Caco-2 (cell line): ENCODE measurements at regions of chr10 and their contacts with region 1.

Region 1: DNA sequence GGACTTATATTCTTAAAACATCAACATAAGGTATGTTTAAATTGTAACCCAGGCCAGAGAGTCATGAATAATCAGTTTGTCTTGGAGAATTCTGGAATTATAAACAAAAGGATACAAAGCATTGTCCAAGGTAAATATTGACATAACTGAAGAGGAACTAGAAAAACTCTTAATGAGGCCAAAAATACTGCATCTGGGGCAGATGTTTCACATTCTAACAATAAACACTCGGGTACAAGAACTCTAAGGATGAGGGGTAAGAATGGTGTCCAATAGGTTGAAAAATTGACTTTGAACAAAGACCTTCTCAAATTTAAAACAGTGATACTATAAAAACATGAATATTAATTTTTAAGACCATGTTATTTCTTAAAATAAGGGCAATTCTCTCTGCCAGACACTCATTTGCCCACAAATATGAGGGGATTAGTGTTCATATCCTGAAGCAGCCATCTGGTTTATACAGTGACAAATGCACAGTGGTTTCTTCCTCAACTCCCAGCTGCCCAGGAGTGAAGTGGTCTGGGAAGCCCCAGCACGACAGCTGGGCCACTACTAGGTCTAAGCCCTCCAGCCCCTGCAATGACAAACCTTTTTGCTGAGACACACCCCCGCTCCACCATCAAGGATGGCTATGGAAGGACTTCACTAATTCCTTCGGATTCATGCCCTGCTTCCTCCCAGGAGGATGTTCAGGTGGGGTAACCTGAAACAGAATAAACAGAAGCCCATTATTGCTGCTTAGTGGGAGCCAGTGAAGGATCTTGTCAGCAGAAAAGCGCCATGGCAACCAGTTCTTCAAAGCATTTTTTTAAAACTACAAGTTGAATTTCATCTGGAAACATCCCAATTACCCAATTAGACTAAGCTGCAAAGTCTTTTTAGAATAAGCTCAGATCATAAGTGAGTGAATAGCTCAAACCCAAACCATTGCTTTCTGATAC is 107.5 kb upstream of the ARID5B start:
- DNase-seq: no peak
- H3K4me3 ChIP-seq: no peak overlapping the region
- H3K4me3 Mint-ChIP-seq: no peak overlapping the region
- H3K27ac Mint-ChIP-seq: no peak overlapping the region
- H3K4me1 ChIP-seq: peaks cover 23% of the 10 kb centered on the region
- H3K4me1 Mint-ChIP-seq: peaks cover 22% of the 10 kb centered on the region
- H3K27me3 ChIP-seq: no peaks in the 10 kb centered on the region
- H3K27me3 Mint-ChIP-seq: no peaks in the 10 kb centered on the region
- CTCF ChIP-seq: no peak

Region 2: DNA sequence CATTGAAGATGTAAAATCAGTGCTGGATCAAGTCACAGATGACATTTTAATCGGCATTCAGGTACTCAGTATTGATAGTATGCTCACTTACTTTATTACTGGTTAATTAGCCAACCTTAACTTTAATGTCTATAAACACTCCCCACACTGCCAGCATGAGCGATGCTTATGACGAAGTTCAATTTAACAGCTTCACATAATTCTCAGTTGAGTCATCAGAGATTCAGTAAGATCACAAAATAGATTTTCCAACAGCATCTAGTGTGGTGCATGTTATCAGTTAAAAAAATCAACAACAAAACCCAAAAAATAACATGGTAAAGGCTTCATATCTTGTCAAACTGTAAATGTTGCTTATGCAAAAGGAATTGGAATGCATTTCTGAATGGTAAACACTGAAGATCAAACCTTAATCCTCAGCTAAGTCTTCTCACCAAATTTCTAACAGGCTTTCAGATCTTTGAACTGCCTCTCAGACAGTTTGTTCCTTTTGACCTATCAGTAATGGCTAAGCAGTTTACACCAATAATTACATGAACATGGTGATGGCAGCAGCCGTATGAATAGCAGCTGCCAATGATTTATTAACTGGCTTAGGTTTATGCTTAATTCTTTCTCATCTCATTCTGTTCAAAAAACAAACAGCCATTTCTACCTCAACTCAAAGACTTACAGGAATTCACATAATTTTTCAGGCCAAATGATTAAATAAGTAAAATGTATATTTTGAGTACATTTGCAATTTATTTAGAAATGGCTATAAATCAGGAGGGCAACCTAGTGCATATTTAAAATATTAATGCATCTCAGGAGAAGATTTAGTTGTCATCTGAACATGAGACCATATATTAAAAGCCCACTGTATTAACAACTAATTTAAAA is 32.8 kb before region 1 on chr10:
- CTCF ChIA-PET with region 1: interaction called, 3 read pairs
- POLR2A ChIA-PET with region 1: no interaction called
- intact Hi-C with region 1: loop called (anchors 2 kb)
- DNase-seq: no peak
- H3K4me3 ChIP-seq: no peak overlapping the region
- H3K4me3 Mint-ChIP-seq: no peak overlapping the region
- H3K27ac Mint-ChIP-seq: peak overlapping the region; percentile 39
- H3K4me1 ChIP-seq: peaks cover 23% of the 10 kb centered on the region
- H3K4me1 Mint-ChIP-seq: peaks cover 18% of the 10 kb centered on the region
- H3K27me3 ChIP-seq: no peaks in the 10 kb centered on the region
- H3K27me3 Mint-ChIP-seq: no peaks in the 10 kb centered on the region
- CTCF ChIP-seq: no peak

Region 3: GRCh38 chr10:61812052-61812721 is 18.2 kb after region 1 on chr10:
- CTCF ChIA-PET with region 1: no interaction called
- POLR2A ChIA-PET with region 1: interaction called, 3 read pairs
- intact Hi-C with region 1: loop called (anchors 2 kb)
- DNase-seq: no peak
- H3K4me3 ChIP-seq: no peak overlapping the region
- H3K4me3 Mint-ChIP-seq: no peak overlapping the region
- H3K27ac Mint-ChIP-seq: no peak overlapping the region
- H3K4me1 ChIP-seq: no peaks in the 10 kb centered on the region
- H3K4me1 Mint-ChIP-seq: no peaks in the 10 kb centered on the region
- H3K27me3 ChIP-seq: no peaks in the 10 kb centered on the region
- H3K27me3 Mint-ChIP-seq: no peaks in the 10 kb centered on the region
- CTCF ChIP-seq: no peak